ENCODE measurements at regions of chr15 and their contacts with region 1.

Region 1: DNA sequence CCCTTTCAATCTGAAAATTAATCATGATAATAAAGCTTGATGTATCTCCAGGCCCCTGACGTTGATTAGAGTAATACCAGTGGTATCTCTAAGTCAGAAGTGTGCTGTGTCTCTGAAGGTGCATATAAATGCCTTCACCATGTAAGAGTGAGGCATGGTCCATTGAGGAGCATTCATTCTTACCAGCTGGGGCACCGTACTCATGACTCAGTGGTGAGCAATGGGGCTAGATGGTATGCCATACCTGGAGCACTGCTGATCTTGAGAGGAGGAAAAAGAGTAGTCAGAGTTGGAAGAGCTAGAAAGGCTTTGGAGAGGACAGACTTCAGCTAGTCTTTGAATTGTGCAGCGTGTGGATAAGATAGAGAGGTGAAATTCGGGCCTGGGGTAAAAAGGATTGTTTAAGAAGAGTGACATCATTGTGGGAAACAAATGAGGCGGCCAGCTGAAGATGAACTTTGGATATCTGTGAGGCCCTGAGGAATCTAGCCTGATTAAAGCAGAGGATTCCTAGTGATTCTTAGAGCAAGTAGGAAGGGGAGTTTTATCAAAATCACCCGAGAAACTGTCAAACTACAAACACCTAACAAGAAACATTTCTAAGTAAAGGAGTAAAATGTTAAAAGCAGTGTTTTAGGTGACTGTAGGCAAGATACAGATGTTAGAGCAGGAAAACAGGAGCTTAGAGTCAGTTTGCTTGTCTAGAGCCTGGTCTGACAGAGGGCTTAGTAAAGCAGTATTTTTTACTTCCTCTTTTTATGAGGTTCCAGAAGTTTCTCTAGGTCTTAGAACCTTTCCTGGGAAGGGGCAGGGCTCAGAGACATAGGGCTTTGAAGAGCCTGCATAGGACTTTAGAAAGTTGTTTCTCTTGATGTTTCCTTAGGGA is 13.6 kb downstream of the TMOD3 start:
- DNase-seq: peak in 2 of 4 experiments; percentile 27 to 54
- ATAC-seq: peak; percentile 78
- H3K4me3 ChIP-seq: no peak overlapping the region
- H3K27ac ChIP-seq: peak overlapping the region; percentile 60
- H3K4me1 ChIP-seq: peaks cover 4 to 52% of the 10 kb centered on the region in 2 experiments
- H3K27me3 ChIP-seq: no peaks in the 10 kb centered on the region
- CTCF ChIP-seq: no peak
- EP300 ChIP-seq: no peak
- POLR2A ChIP-seq: no peak
- RAD21 ChIP-seq: no peak

Region 2: GRCh38 chr15:51829360-51830275 is 13.5 kb before region 1 on chr15 and contains the start of gene TMOD3:
- CTCF ChIA-PET with region 1: no interaction called
- POLR2A ChIA-PET with region 1: interaction called, 18 read pairs
- in situ Hi-C with region 1: no loop called
- intact Hi-C with region 1: no loop called
- DNase-seq: peak; percentile 94 to 98 (median 96)
- ATAC-seq: peak; percentile 91
- H3K4me3 ChIP-seq: peak within 1 kb of the TSS; percentile 91
- H3K27ac ChIP-seq: peak within 1 kb of the TSS; percentile 87
- H3K4me1 ChIP-seq: peaks cover 16 to 17% of the 10 kb centered on the region in 2 experiments; a peak in 4 of 5 replicates
- H3K27me3 ChIP-seq: no peaks in the 10 kb centered on the region
- CTCF ChIP-seq: no peak
- EP300 ChIP-seq: no peak
- POLR2A ChIP-seq: peak; percentile 94
- RAD21 ChIP-seq: no peak
- polyA plus RNA-seq, gene TMOD3: 6.8 to 12.0 TPM

Region 3: GRCh38 chr15:51853998-51854397 is 10.9 kb after region 1 on chr15:
- CTCF ChIA-PET with region 1: no interaction called
- POLR2A ChIA-PET with region 1: interaction called, 30 read pairs
- in situ Hi-C with region 1: no loop called
- intact Hi-C with region 1: no loop called
- DNase-seq: no peak
- ATAC-seq: no peak
- H3K4me3 ChIP-seq: no peak overlapping the region
- H3K27ac ChIP-seq: no peak overlapping the region
- H3K4me1 ChIP-seq: peaks cover 0 to 4% of the 10 kb centered on the region in 2 experiments; a peak in 2 of 5 replicates
- H3K27me3 ChIP-seq: no peaks in the 10 kb centered on the region
- CTCF ChIP-seq: no peak
- EP300 ChIP-seq: no peak
- POLR2A ChIP-seq: no peak
- RAD21 ChIP-seq: no peak

Measured in K562 (cell line).